Lower leg skin (tissue), 4 donors: ENCODE measurements at regions of chr1 and their contacts with region 1.

Region 1: DNA sequence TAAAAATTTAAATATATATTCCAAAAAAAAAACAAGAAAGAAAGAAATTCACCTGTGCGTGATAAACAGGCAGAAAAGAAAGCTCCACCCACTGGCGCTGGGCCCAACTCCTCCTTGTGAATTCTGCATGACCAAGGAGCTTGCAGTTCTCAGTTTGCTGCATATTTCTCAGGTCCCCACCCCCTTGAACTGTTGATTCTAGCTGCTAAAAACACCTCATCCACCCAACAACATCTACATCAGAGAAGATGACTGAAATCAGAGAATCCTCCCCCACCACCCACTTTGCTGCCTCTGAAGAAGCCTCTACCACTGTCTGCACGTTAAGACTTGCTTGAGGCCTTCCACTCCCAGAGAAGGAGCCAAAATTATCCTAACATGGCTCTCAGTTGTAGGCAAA is 104.8 kb downstream of the RGS2 start:
- DNase-seq: no peak
- H3K4me3 ChIP-seq: no peak overlapping the region
- CTCF ChIP-seq: no peak
- POLR2A ChIP-seq: no peak

Region 2: GRCh38 chr1:193190096-193190744 is 276.5 kb after region 1 on chr1:
- intact Hi-C with region 1: no loop called
- DNase-seq: no peak
- H3K4me3 ChIP-seq: no peak overlapping the region
- CTCF ChIP-seq: no peak
- POLR2A ChIP-seq: no peak

Region 3: DNA sequence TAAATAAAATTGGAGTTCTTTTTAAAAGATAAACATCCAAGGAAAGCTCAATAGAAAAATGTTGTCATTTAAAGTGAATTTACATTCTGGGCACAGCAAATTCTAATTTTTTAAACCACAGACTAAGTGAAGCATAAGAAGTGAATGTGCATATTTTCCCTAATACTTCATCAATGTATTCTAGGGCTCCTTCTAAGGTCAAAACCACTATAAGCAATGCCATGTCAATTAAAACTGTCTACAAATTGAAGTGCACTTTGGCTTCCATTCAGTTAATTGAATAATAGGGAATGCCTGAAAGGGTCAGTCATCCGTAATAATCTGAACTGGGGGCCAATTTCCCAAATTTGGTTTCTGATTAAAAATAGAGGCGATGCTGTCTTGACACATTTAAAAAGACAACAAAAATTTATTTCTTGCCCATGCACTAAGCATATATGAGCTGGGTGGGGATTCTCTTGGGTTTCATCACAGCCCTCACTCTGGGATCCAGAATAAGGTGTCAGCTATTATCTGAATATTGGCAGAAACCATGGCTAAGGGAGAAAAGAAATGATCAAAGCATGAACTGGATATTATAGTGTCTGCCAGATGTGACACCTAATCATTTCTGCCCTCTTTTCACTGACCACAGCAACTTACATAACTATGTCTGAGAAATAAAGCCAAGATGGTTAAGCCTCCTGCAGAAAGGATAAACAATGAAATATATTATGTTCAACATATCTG is 933.4 kb after region 1 on chr1:
- intact Hi-C with region 1: loop called (anchors 5 kb)
- DNase-seq: no peak
- H3K4me3 ChIP-seq: no peak overlapping the region
- CTCF ChIP-seq: no peak
- POLR2A ChIP-seq: no peak